ENCODE measurements at regions of chr6 and their contacts with region 1.

Region 1: GRCh38 chr6:2103644-2104523 is 141.5 kb downstream of the GMDS start:
- DNase-seq: peak; percentile 33 to 59
- ATAC-seq: peak; percentile 93 to 97
- H3K4me3 ChIP-seq: 0 out of 3 replicates have a peak overlapping the region, but pooled peaks have one; percentile 13
- H3K27ac ChIP-seq: 0 out of 6 replicates have a peak overlapping the region, but pooled peaks have one; percentile 14 to 29
- H3K4me1 ChIP-seq: peaks cover 25% of the 10 kb centered on the region
- CTCF ChIP-seq: peak; percentile 58
- EP300 ChIP-seq: no peak
- POLR2A ChIP-seq: no peak
- RAD21 ChIP-seq: peak; percentile 78

Region 2: DNA sequence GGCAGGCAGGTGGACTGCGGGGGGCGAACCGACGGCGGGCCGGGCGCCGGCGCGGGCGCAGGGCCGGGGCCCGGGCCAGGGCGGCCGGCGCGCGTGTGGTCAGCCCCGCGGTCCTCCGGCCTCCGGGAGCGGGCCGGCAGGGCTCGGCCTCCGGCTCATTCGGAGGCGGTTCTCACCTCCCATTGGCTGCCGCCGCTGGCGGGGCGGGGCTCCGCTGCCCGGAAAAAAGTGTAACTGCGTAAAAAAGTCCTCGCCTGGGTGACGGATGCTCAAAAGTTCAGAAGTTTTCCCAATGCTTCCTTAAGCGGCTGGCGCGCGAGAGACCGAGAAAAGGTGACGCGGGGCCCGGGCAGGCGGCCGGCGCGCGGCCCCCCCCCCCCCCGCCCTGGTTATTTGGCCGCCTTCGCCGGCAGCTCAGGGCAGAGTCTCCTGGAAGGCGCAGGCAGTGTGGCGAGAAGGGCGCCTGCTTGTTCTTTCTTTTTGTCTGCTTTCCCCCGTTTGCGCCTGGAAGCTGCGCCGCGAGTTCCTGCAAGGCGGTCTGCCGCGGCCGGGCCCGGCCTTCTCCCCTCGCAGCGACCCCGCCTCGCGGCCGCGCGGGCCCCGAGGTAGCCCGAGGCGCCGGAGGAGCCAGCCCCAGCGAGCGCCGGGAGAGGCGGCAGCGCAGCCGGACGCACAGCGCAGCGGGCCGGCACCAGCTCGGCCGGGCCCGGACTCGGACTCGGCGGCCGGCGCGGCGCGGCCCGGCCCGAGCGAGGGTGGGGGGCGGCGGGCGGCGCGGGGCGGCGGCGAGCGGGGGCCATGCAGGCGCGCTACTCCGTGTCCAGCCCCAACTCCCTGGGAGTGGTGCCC is 494.0 kb before region 1 on chr6 and contains the start of gene FOXC1:
- CTCF ChIA-PET with region 1: interaction called, 23 read pairs
- POLR2A ChIA-PET with region 1: interaction called, 10 read pairs
- DNase-seq: peak; percentile 86 to 90
- ATAC-seq: peak; percentile 69 to 89
- H3K4me3 ChIP-seq: peak within 1 kb of the TSS; percentile 83
- H3K27ac ChIP-seq: peak within 1 kb of the TSS; percentile 88 to 99
- H3K4me1 ChIP-seq: peaks cover 13% of the 10 kb centered on the region; the same call in 2 of the 3 replicates
- CTCF ChIP-seq: no peak
- EP300 ChIP-seq: no peak
- POLR2A ChIP-seq: peak; percentile 55
- RAD21 ChIP-seq: no peak
- polyA plus RNA-seq, gene FOXC1: 3.7 and 4.7 TPM in 2 replicates

Region 3: GRCh38 chr6:1787894-1788293 is 316.0 kb before region 1 on chr6:
- CTCF ChIA-PET with region 1: no interaction called
- POLR2A ChIA-PET with region 1: no interaction called
- DNase-seq: no peak
- ATAC-seq: no peak
- H3K4me3 ChIP-seq: no peak overlapping the region
- H3K27ac ChIP-seq: no peak overlapping the region
- H3K4me1 ChIP-seq: no peaks in the 10 kb centered on the region
- CTCF ChIP-seq: no peak
- EP300 ChIP-seq: no peak
- POLR2A ChIP-seq: no peak
- RAD21 ChIP-seq: no peak

Region 4: DNA sequence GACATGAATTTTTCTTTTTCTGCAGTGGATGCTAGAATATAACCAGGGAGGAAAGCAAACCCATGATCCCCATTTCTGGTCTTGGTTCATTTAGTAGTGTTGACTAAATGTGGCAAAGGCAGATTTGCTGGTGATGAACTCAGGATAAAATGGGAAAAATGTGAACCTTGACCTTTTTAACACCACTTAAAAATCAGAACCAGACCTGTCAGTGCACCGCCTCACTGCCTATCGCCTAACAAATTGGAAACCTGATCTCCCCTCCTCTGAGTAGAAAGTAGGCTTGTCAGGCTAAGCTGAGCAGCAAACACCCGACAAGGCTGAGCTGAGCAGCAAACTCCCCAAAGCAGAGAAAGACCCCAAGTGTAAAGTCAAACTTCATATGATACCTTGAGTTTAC is 239.4 kb before region 1 on chr6:
- CTCF ChIA-PET with region 1: no interaction called
- POLR2A ChIA-PET with region 1: no interaction called
- DNase-seq: no peak
- ATAC-seq: no peak
- H3K4me3 ChIP-seq: no peak overlapping the region
- H3K27ac ChIP-seq: no peak overlapping the region
- H3K4me1 ChIP-seq: no peaks in the 10 kb centered on the region
- CTCF ChIP-seq: no peak
- EP300 ChIP-seq: no peak
- POLR2A ChIP-seq: no peak
- RAD21 ChIP-seq: no peak

Region 5: DNA sequence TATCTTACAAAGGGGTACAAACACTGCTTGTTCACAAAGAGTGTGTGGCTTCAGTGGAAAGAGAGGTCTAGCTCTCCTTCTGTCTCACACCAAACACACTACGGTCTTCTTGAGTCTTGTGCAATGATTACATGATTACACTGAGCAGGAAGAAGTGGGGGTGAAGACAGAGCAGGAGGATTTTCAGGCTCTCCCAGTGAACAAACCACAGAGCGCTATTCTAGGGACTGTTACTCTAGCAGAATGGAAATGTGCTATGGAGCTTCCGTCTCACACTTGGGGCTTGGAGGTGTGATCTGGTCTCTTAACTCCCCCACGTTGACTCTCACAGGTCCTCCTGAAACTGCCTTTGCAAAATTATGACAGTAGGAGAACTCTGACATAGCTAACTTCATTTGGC is 443.5 kb after region 1 on chr6:
- CTCF ChIA-PET with region 1: no interaction called
- POLR2A ChIA-PET with region 1: no interaction called
- DNase-seq: no peak
- ATAC-seq: no peak
- H3K4me3 ChIP-seq: no peak overlapping the region
- H3K27ac ChIP-seq: no peak overlapping the region
- H3K4me1 ChIP-seq: no peaks in the 10 kb centered on the region
- CTCF ChIP-seq: no peak
- EP300 ChIP-seq: no peak
- POLR2A ChIP-seq: no peak
- RAD21 ChIP-seq: no peak